CD4-positive, alpha-beta memory T cell (primary cell): ENCODE measurements at regions of chr10 and their contacts with region 1.

Region 1: GRCh38 chr10:12710594-12711349 is 290.7 kb downstream of the CCDC3 start:
- DNase-seq: peak; percentile 69 to 73 (median 70)
- H3K4me3 ChIP-seq: no peak overlapping the region
- H3K4me3 Mint-ChIP-seq: no peak overlapping the region
- H3K27ac ChIP-seq: no peak overlapping the region
- H3K27ac Mint-ChIP-seq: peak overlapping the region in 1 of 7 donors; percentile 57
- H3K4me1 ChIP-seq: peaks cover 4% of the 10 kb centered on the region
- H3K4me1 Mint-ChIP-seq: peaks cover 4 to 17% (median 7%) of the 10 kb centered on the region in 4 donors
- H3K27me3 ChIP-seq: no peaks in the 10 kb centered on the region
- H3K27me3 Mint-ChIP-seq: no peaks in the 10 kb centered on the region

Region 2: DNA sequence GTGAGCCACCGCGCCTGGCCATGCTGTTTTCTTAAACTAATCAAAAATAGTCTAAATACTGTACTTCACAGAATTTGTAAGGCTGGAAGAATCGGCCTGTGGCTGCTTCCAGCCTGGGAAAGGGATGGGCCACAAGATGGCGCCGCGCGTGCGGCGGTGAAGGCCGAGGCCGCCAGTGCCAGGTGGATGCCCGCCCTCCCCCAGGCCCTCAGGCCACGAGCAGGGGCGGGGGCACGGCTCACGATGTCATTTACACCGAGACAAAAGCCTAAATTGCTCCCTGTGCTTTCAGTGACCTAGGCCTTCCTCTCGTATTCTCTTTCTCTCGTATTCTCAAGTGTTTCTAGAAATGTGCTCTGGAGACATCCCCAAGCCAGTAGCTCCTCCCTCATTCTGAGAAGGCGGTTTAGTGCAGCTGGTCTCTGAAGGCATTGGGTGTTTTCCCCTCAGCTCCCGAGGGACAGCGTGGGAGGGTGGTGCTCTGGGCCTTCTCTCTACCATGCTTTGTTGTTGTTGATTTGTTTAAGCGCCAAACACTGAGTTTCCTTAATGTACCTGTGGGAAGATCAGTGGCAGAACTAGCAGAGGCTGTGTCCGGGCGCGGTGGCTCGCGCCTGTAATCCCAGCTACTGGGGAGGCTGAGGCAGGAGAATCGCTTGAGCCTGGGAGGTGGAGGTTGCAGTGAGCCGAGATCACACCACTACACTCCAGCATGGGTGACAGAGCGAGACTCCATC is 446.4 kb before region 1 on chr10:
- CTCF ChIA-PET with region 1: interaction called, 142 read pairs
- POLR2A ChIA-PET with region 1: interaction called, 3 read pairs
- intact Hi-C with region 1: loop called (anchors 1 kb)
- DNase-seq: peak; percentile 59 to 73 (median 63)
- H3K4me3 ChIP-seq: peak overlapping the region in 1 of 2 donors; percentile 27
- H3K4me3 Mint-ChIP-seq: peak overlapping the region; percentile 41 to 84 (median 77)
- H3K27ac ChIP-seq: no peak overlapping the region
- H3K27ac Mint-ChIP-seq: peak overlapping the region in 5 of 7 donors; percentile 2 to 82 (median 78)
- H3K4me1 ChIP-seq: peaks cover 4% of the 10 kb centered on the region
- H3K4me1 Mint-ChIP-seq: peaks cover 7 to 18% (median 13%) of the 10 kb centered on the region in 4 donors
- H3K27me3 ChIP-seq: no peaks in the 10 kb centered on the region
- H3K27me3 Mint-ChIP-seq: no peaks in the 10 kb centered on the region

Region 3: DNA sequence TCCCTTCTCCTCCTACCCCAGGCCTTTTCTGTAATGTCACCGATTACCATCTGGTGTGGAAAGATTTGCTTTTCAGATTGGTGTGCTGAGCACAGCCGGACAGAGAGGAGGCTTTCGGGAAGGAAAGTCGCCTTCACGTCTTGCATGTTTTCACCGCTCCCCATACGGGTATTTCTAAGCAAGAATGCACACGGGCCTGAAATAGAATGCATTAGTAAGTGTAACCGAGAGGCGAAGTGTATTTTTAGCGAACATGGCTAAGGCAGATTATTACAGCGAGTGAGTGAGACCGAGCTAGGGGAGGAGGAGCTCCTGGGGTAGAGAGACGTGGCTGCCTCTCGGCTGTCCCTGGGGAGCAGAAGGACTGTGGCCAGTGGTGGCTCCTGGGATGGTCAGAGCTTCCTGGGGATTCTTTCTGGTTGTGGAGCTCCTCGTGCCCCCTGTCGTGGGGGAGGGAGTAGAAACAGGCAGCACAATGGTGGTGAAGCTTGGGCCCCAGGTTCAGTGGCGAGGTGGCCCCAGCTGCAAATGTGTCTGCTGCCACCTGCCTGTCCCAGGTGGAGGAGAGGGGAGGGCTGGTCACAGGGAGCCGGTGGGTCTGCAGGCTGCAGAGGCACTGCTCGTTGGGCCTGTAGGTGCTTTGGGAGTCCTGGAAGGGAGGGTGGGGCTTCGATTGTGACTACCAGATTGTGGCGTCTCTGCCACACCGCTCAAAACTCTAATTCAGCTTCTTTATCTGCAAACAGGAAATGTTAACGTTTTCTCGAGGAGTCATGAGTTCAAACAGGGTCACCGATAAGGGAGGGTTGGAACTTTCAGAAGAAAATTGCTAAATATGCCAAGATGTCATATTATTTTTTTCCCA is 225.6 kb before region 1 on chr10:
- CTCF ChIA-PET with region 1: interaction called, 10 read pairs
- POLR2A ChIA-PET with region 1: no interaction called
- intact Hi-C with region 1: no loop called
- DNase-seq: peak in 4 of 5 donors; percentile 11 to 22 (median 14)
- H3K4me3 ChIP-seq: no peak overlapping the region
- H3K4me3 Mint-ChIP-seq: peak overlapping the region in 4 of 8 donors; percentile 2 to 51 (median 48)
- H3K27ac ChIP-seq: no peak overlapping the region
- H3K27ac Mint-ChIP-seq: peak overlapping the region in 6 of 7 donors; percentile 25 to 78 (median 64)
- H3K4me1 ChIP-seq: peaks cover 13% of the 10 kb centered on the region
- H3K4me1 Mint-ChIP-seq: peaks cover 20 to 37% (median 27%) of the 10 kb centered on the region in 4 donors
- H3K27me3 ChIP-seq: no peaks in the 10 kb centered on the region
- H3K27me3 Mint-ChIP-seq: no peaks in the 10 kb centered on the region

Region 4: GRCh38 chr10:12726971-12727831 is 16.4 kb after region 1 on chr10:
- CTCF ChIA-PET with region 1: interaction called, 12 read pairs
- POLR2A ChIA-PET with region 1: no interaction called
- intact Hi-C with region 1: no loop called
- DNase-seq: peak in 4 of 5 donors; percentile 7 to 58 (median 24)
- H3K4me3 ChIP-seq: no peak overlapping the region
- H3K4me3 Mint-ChIP-seq: peak overlapping the region in 1 of 8 donors; percentile 5
- H3K27ac ChIP-seq: no peak overlapping the region
- H3K27ac Mint-ChIP-seq: peak overlapping the region in 4 of 7 donors; percentile 9 to 68 (median 42)
- H3K4me1 ChIP-seq: peaks cover 8% of the 10 kb centered on the region
- H3K4me1 Mint-ChIP-seq: peaks cover 9 to 20% (median 17%) of the 10 kb centered on the region in 4 donors
- H3K27me3 ChIP-seq: no peaks in the 10 kb centered on the region
- H3K27me3 Mint-ChIP-seq: no peaks in the 10 kb centered on the region

Region 5: DNA sequence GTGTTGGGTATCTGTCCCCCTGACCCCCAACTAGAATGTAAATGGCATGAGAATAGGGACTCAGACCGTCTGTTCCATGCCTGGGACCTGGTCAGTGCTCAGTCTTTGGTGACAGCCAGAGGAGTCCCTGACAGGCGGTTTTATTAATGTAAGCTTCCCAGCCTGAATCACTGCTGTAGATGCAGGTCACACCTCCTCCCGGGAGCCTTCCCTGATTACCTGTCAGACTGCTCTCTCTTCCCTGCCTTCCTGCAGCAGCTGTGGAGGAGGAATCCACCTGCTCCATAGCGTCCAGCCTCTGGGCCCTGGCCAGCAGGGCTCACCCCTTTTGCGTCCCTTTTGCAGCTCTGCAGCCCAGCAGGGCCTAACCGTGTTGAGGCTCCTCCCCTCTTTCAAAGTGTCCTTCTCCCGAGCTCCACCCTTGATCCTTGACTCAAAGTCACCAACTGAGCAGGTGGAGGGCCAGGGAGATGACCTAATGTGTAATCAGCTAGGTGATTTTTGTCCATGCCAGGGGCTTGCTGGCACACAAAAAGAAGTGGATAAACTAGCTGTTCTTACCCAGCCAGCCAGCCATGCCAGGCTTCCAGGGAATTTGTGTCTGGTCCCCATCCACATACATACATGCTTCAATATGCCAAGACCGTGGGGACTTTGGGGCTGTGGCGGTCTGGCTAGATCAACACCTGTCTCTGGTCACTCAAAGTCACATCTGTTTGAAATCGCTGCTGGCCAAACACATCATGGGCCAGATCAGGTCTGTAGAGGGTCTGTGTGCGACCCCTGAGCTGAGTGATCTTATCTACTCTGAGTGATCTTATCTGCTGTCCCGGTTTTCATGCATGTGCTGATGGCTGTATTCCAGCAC is 95.7 kb after region 1 on chr10:
- CTCF ChIA-PET with region 1: no interaction called
- POLR2A ChIA-PET with region 1: no interaction called
- intact Hi-C with region 1: no loop called
- DNase-seq: peak in 1 of 5 donors; percentile 17
- H3K4me3 ChIP-seq: no peak overlapping the region
- H3K4me3 Mint-ChIP-seq: no peak overlapping the region
- H3K27ac ChIP-seq: no peak overlapping the region
- H3K27ac Mint-ChIP-seq: no peak overlapping the region
- H3K4me1 ChIP-seq: no peaks in the 10 kb centered on the region
- H3K4me1 Mint-ChIP-seq: peaks cover 0 to 2% (median 0%) of the 10 kb centered on the region in 4 donors
- H3K27me3 ChIP-seq: no peaks in the 10 kb centered on the region
- H3K27me3 Mint-ChIP-seq: no peaks in the 10 kb centered on the region

Region 6: GRCh38 chr10:12844811-12845533 is 134.2 kb after region 1 on chr10:
- CTCF ChIA-PET with region 1: no interaction called
- POLR2A ChIA-PET with region 1: no interaction called
- intact Hi-C with region 1: no loop called
- DNase-seq: no peak
- H3K4me3 ChIP-seq: no peak overlapping the region
- H3K4me3 Mint-ChIP-seq: no peak overlapping the region
- H3K27ac ChIP-seq: no peak overlapping the region
- H3K27ac Mint-ChIP-seq: no peak overlapping the region
- H3K4me1 ChIP-seq: no peaks in the 10 kb centered on the region
- H3K4me1 Mint-ChIP-seq: peaks cover 0 to 8% (median 0%) of the 10 kb centered on the region in 4 donors
- H3K27me3 ChIP-seq: no peaks in the 10 kb centered on the region
- H3K27me3 Mint-ChIP-seq: peaks cover 4 to 15% of the 10 kb centered on the region in 2 donors